GM10248 (cell line): ENCODE measurements at regions of chrX and their contacts with region 1.

Region 1: DNA sequence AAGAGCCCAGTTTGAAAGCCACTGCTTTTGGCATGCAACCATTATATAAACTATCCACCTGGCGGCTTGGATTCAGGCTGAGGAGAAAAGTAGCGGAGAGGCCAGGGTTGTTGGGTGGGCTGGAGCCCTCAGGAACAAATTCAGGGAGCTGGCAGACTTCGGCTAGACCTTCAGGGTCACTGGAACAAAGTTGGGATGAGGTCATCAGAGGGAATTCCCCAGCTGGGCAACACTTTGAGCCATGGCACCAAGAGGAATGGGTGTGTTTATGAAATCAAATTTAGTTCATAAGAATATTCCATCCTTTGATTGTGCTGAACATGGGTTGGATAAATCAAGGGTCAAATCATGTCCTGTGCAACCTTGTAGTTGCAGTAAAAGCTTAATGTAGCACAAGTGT is 22.0 kb downstream of the MTMR1 start:
- DNase-seq: no peak
- CTCF ChIP-seq: no peak

Region 2: DNA sequence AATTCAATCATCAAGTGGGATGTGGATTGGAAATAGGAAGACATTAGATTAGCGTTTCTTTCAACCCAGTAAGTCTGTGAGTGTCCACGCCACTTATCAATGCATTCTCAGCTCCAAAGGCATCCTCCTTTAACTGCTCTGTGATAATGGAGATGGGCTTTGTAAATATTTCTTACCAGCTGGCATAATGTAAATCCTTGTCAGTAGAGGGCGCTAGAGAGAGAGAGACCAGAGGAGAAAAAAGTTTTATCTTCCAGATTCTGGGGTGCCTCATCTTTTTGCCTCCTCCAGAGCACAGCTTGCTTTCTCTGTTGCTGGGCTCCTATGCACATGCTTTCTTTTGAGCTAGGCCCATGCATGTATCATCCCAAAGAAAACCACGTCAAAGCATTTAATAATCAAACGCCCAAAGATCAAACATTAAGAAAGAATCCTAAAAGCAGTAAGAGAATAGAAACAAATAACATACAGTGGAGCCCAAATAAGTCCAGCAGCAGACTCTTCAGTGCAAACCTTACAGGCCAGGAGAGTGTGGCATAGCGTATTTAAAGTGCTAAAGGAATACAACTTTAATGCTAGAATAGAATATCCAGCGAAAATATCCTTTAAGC is 31.5 kb before region 1 on chrX:
- CTCF ChIA-PET with region 1: interaction called, 26 read pairs
- POLR2A ChIA-PET with region 1: no interaction called
- DNase-seq: peak; percentile 37
- CTCF ChIP-seq: peak; percentile 18

Region 3: DNA sequence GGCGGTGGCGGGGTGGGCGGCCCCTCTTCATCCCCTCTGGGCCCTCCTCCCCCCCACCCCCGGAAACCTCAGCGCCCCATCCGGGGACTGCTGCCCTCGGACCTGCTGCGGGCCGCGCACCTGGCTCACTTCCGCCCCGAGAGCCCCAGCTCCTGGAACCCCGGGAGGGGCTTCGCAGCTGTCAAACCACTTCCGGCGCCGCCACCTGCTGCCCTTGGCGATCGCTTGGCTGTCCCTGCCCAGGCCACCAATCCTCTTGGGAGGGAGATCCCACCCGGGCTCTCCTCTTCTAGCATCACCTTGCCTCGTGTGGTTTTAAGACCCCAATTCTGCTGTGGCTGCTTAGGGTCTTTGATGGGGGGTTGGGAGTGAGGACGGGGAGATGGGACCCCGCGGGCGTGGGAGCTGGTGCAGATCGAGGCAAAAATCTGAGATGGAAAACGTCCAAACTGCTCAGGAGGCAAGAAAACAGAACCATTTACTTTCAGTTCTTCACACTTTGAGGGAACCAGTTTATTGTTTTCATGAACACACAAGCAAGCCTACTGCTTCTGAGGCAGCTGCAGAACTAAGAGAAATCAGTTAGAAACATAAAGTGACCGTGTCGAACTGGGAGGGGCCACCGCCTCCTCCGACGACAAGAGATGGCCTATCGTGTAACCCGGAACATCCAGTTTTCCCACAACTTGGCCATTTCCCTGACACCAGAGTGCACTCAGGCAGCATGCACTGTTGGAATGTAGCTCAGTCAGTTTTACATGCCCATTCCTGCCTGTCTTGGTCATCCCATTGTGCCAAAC is 21.2 kb before region 1 on chrX:
- CTCF ChIA-PET with region 1: interaction called, 11 read pairs
- POLR2A ChIA-PET with region 1: no interaction called
- DNase-seq: peak; percentile 87
- CTCF ChIP-seq: no peak

Region 4: DNA sequence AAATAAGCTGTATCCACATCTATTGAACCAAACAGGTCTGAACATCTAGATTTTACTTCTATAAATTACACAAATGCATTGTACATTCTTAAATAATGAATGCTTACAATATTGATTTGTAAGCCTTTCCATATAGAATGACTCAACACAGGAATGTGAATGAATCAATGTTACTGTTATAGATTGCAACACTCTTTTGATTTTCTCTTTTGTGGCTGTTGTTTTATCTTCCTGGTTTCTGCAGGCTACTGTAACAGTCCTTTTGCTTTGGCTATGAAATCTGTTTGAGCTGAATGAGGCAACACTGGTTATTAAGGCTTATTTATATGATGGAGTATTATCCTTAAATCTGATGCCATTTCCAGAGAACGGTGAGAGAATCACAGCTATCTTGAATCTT is 510.7 kb after region 1 on chrX:
- CTCF ChIA-PET with region 1: no interaction called
- POLR2A ChIA-PET with region 1: no interaction called
- DNase-seq: no peak
- CTCF ChIP-seq: no peak